ENCODE measurements at regions of chr2 and their contacts with region 1.

Region 1: DNA sequence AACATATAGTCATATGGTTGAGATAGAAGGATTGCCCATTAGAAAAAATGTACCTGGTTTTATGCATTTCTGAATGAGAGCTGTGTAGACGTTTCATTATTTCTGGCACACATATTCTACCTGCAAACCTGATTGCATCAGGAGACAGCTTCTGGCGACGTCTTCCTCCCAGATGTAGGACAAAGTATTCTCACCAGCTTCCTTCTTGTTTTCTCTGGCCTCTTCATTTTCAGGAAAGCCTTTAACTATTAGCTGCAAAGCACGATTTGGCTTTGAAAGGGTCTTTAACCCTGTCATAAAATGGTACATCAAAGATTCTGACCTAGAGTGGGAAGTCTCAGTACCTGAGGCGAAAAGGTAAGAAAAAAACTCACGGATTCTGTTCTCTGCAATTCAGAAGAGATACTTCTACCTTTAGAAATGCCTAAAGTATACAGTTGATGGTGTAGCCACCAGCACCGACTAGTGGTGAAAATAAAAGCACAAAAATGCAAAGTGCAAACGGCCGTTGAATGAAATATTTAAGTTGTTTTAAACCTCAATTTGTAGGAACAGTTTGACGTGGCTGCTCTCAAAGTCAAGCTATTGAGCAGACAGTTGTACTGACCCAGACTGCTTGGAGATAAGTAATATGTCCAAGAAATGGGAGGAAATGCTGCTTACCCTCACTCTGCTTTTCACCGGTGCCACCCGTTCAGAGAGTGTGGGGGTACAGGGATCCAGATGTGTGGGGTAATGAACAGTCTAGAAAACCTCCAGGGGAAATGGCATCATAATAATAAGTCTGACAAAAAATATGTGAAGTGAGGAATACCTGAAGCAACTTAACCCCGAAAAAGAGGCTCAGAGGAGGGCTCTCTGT is 20.2 kb downstream of the IL18RAP start:
- DNase-seq: peak in 32 of 35 experiments; percentile 7 to 74 (median 35)
- ATAC-seq: peak; percentile 68 to 85 (median 78)
- H3K4me3 ChIP-seq: no peak overlapping the region
- H3K4me3 Mint-ChIP-seq: peak overlapping the region; percentile 26 to 40 (median 27)
- H3K27ac ChIP-seq: peak overlapping the region; percentile 26
- H3K27ac Mint-ChIP-seq: peak overlapping the region; percentile 66 to 73
- H3K4me1 ChIP-seq: peaks cover 0 to 3% of the 10 kb centered on the region in 2 experiments
- H3K4me1 Mint-ChIP-seq: peaks cover 6 to 8% (median 8%) of the 10 kb centered on the region in 3 donors
- H3K27me3 ChIP-seq: no peaks in the 10 kb centered on the region
- H3K27me3 Mint-ChIP-seq: no peaks in the 10 kb centered on the region

Region 2: DNA sequence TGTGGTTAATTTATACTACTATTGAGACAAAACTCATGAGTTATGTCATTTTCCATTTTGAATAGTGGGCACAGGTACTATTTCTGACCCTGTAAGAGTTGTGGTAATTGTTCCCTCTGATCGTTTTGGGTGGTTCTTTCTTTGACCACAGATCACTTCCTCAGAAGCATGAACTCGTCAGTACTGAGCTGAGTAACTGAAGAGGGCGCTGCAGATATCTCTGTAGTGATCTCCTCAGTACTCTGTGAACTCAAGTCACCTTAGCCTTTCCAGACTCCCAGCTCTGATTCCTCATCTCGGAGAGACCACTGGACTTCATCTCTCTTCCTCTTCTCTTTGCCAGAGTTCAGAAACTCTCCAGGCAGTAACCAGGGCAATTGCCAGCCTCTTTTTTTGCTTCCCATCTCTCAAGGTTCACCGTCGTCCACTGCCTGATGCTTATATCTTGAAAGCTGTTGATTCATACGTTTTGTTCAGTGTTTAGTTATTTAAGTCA is 141.3 kb before region 1 on chr2:
- CTCF ChIA-PET with region 1: interaction called, 4 to 28 read pairs
- POLR2A ChIA-PET with region 1: no interaction called
- DNase-seq: peak in 32 of 35 experiments; percentile 9 to 72 (median 32)
- ATAC-seq: peak; percentile 70 to 96 (median 92)
- H3K4me3 ChIP-seq: no peak overlapping the region
- H3K4me3 Mint-ChIP-seq: peak overlapping the region in 1 of 3 donors; percentile 4
- H3K27ac ChIP-seq: no peak overlapping the region
- H3K27ac Mint-ChIP-seq: peak overlapping the region in 1 of 2 donors; percentile 6
- H3K4me1 ChIP-seq: peaks cover 0 to 3% of the 10 kb centered on the region in 2 experiments
- H3K4me1 Mint-ChIP-seq: peaks cover 17 to 19% (median 18%) of the 10 kb centered on the region in 3 donors
- H3K27me3 ChIP-seq: no peaks in the 10 kb centered on the region
- H3K27me3 Mint-ChIP-seq: peaks cover 5 to 8% of the 10 kb centered on the region in 2 donors

Region 3: DNA sequence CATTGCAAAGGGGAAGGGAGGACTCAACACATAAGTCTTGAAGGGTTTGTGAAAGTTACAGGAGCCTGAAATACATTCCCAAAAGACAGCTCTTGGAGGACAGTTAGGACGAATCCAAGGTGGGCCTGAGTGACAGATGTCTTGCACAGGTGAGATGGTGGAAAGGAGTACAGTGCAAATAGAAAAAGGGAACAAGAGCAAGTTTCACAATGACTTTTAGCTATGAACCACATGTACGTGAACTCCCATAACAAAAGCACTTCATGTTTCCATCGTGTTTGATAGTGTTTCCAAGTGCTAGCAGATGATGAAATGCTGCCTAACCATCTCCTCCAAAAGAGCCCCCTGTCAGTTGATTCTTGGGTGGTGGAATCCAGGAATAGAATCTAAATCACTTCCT is 18.4 kb before region 1 on chr2:
- CTCF ChIA-PET with region 1: interaction called in 1 of 2 experiments, 14 read pairs
- POLR2A ChIA-PET with region 1: no interaction called
- DNase-seq: no peak
- ATAC-seq: no peak
- H3K4me3 ChIP-seq: no peak overlapping the region
- H3K4me3 Mint-ChIP-seq: peak overlapping the region in 1 of 3 donors; percentile 4
- H3K27ac ChIP-seq: peak overlapping the region; percentile 19
- H3K27ac Mint-ChIP-seq: peak overlapping the region; percentile 57 to 62
- H3K4me1 ChIP-seq: peaks cover 2 to 21% of the 10 kb centered on the region in 2 experiments
- H3K4me1 Mint-ChIP-seq: peaks cover 35 to 82% (median 48%) of the 10 kb centered on the region in 3 donors
- H3K27me3 ChIP-seq: no peaks in the 10 kb centered on the region
- H3K27me3 Mint-ChIP-seq: no peaks in the 10 kb centered on the region

Measured in T-cell (primary cell).